Thyroid gland (tissue), 4 donors: ENCODE measurements at regions of chr1 and their contacts with region 1.

Region 1: DNA sequence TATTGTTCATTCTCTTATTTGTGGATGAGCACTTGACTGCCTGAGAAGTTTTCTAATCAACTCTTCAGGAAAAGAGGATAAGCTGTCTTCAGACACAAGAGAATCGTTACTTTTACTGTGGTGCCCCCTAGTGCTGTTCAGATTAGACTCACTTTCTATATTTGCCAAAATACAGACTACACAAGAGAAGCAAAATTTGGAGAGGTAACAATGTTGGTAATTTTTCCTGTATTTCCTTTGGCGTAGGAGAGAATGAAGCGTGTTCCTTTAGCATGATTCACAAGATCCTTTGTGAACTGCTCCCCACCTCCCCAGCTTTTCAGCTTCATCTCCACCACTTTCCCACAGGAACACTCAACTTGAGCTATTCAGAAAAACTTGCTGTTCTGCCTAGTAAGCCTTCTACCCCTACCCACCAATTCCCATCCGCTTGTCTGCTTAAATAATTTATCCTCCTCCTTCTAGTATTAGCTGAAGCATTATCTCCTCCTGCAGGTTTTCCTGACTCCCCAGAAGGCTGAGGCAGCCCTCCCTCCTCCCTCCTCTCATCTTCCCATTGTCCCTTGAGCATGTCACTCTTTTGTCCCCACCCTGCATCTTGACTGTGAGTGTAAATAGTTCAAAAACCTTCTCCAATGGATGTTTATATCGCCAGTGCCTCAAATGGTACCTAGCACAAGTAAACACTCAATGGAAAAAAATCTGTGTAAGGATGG is 4.5 kb downstream of the TNFSF4 start:
- DNase-seq: peak in 1 of 2 donors; percentile 4
- H3K4me3 ChIP-seq: no peak overlapping the region
- H3K27ac ChIP-seq: no peak overlapping the region
- H3K4me1 ChIP-seq: no peaks in the 10 kb centered on the region
- H3K27me3 ChIP-seq: no peaks in the 10 kb centered on the region
- CTCF ChIP-seq: peak; percentile 27 to 79 (median 54)
- POLR2A ChIP-seq: no peak

Region 2: DNA sequence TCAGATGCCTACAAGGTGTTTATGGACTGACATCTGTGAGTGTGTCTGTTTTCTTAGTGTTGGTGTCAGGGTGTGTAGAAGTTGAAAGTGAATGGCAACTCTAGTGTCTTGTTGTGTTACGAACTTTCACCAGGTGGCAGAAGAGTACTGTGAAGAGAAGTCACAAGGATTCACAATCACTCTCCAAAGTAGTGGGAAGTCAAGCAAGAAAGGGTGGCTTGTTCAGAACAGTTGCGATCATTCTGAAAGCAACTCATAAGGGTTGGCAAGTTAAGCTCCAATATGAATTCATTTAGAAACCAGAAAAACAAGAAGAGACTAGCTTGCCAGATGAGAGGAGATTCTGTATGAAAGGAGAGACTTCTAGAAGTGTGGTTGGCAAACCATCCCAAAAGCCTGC is 457.6 kb before region 1 on chr1:
- intact Hi-C with region 1: loop called (anchors 5 kb)
- DNase-seq: no peak
- H3K4me3 ChIP-seq: no peak overlapping the region
- H3K27ac ChIP-seq: no peak overlapping the region
- H3K4me1 ChIP-seq: peaks cover 0 to 3% of the 10 kb centered on the region in 2 donors
- H3K27me3 ChIP-seq: no peaks in the 10 kb centered on the region
- CTCF ChIP-seq: peak in 3 of 6 experiments; percentile 45 to 53 (median 46)
- POLR2A ChIP-seq: no peak

Region 3: DNA sequence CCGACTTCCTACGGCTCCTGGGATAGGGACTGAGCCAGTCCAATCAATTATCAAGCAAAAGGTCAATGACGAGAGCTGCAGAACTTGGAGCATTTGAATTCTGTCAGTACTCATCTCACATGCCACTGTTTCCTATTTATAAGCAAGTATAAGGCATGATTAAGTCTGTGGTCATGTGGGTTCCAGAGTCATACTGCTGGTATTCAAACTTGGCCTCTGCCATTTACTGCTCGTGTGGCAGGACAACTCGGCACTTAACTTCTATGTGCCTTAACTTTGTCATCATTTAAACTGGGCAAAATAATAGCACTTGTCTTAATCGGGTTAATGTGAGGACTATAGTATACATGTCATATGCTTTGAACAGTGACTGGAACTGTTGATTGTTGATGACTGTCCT is 107.0 kb before region 1 on chr1:
- intact Hi-C with region 1: no loop called
- DNase-seq: no peak
- H3K4me3 ChIP-seq: no peak overlapping the region
- H3K27ac ChIP-seq: no peak overlapping the region
- H3K4me1 ChIP-seq: no peaks in the 10 kb centered on the region
- H3K27me3 ChIP-seq: no peaks in the 10 kb centered on the region
- CTCF ChIP-seq: no peak
- POLR2A ChIP-seq: no peak

Region 4: DNA sequence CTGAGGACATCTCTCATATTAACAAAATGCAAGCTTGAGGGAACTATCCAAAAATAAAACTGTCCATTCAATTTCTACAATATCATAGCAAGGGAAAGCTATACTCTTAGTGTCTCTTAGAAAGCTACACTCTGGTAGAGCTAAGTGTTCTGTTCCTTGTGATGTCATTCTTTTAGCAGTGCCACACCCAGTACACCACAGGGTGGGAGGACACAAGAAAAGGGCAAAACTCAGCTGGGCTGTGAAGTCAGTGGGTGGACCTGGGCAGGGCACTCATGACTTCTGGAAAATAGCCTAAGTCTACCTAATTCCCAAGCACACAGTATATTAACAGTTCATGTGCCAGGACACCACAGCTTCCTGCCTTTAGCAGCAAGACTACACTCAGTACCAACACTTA is 46.8 kb after region 1 on chr1:
- intact Hi-C with region 1: no loop called
- DNase-seq: no peak
- H3K4me3 ChIP-seq: no peak overlapping the region
- H3K27ac ChIP-seq: no peak overlapping the region
- H3K4me1 ChIP-seq: no peaks in the 10 kb centered on the region
- H3K27me3 ChIP-seq: no peaks in the 10 kb centered on the region
- CTCF ChIP-seq: no peak
- POLR2A ChIP-seq: no peak